ENCODE measurements at regions of chr21 and their contacts with region 1.

Region 1: GRCh38 chr21:42818328-42818749 is 61.0 kb downstream of the WDR4 start:
- DNase-seq: peak; percentile 70
- ATAC-seq: peak; percentile 69
- H3K4me3 ChIP-seq: no peak overlapping the region
- H3K4me3 Mint-ChIP-seq: no peak overlapping the region
- H3K27ac ChIP-seq: no peak overlapping the region
- H3K27ac Mint-ChIP-seq: no peak overlapping the region
- H3K4me1 ChIP-seq: no peaks in the 10 kb centered on the region
- H3K4me1 Mint-ChIP-seq: no peaks in the 10 kb centered on the region
- H3K27me3 ChIP-seq: peaks cover 0 to 3% (median 1%) of the 10 kb centered on the region in 4 experiments
- H3K27me3 Mint-ChIP-seq: peaks cover 11% of the 10 kb centered on the region
- CTCF ChIP-seq: peak; percentile 85

Region 2: DNA sequence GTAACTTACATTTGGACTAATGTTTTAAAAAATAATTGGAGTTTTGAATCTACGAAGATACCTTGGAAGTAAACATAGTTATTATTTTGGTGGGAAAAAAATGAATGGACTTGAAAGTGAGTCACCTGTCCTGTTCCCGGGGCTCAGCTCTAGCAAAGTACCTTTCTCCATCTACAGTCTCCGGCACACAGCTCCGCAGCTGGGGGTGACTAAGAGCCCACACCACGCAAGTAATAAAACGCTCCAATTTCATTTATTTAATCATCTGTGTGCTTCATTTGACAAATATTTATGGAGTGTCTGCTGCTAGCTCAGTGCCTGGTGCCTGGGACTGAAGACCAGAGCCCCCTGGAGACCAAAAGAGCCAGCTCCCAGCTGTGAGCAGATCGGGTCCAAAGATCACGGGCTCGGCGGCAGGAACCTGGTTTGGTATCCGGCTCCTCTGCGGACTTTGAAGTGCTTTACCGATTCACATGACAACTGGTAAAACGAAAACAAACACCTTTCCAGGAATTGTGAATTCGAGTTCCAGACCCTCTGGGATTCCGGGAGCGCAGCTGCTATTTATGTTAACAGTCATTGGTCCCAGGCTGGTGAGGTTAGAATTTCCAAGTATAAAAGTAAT is 1049.8 kb before region 1 on chr21:
- CTCF ChIA-PET with region 1: no interaction called
- POLR2A ChIA-PET with region 1: no interaction called
- intact Hi-C with region 1: no loop called
- DNase-seq: peak; percentile 52
- ATAC-seq: no peak
- H3K4me3 ChIP-seq: peak overlapping the region in 4 of 5 experiments; percentile 8 to 61 (median 40)
- H3K4me3 Mint-ChIP-seq: peak overlapping the region; percentile 88
- H3K27ac ChIP-seq: no peak overlapping the region
- H3K27ac Mint-ChIP-seq: no peak overlapping the region
- H3K4me1 ChIP-seq: peaks cover 28 to 33% of the 10 kb centered on the region in 2 donors
- H3K4me1 Mint-ChIP-seq: peaks cover 24% of the 10 kb centered on the region
- H3K27me3 ChIP-seq: peaks cover 0 to 76% (median 40%) of the 10 kb centered on the region in 4 experiments
- H3K27me3 Mint-ChIP-seq: peaks cover 83% of the 10 kb centered on the region
- CTCF ChIP-seq: no peak

Region 3: DNA sequence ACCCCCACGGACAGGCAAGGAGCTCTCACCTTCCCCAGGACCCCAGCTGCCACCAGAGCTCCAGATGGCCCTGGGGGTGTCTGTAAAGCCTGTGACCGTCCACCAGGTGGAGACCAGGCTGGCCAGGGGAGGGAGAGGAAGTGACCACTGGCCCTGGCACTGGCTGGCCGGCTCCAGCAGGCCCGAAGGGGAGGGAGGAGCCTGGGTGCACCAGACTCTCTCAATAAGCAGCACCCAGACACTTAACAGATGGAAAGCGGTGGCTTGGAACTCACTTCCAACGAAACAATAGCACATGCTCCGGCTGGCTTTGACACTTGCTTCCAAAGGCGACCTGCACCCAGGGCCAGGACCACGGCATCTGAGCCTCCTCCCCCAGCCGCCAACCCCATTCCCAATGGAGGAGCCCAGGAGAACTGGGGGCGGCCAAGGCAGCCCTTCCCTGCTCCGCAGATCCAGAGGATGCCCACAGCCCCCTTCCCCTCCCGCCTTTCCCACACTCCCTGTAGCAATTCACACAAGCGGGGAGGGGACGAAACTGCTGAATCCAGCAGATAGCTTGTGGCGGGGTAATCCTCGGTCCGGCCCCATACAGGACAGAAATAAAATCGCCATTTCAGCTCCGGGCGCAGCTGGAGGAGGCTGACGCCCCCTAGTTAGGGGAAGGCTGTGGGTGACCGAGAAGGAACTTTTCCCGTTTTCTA is 165.7 kb before region 1 on chr21:
- CTCF ChIA-PET with region 1: no interaction called
- POLR2A ChIA-PET with region 1: no interaction called
- intact Hi-C with region 1: loop called (anchors 1 kb)
- DNase-seq: no peak
- ATAC-seq: no peak
- H3K4me3 ChIP-seq: peak overlapping the region in 1 of 5 experiments; percentile 19
- H3K4me3 Mint-ChIP-seq: peak overlapping the region; percentile 80
- H3K27ac ChIP-seq: no peak overlapping the region
- H3K27ac Mint-ChIP-seq: peak overlapping the region; percentile 32
- H3K4me1 ChIP-seq: peaks cover 31 to 34% of the 10 kb centered on the region in 2 donors
- H3K4me1 Mint-ChIP-seq: peaks cover 16% of the 10 kb centered on the region
- H3K27me3 ChIP-seq: peaks cover 0 to 53% (median 30%) of the 10 kb centered on the region in 4 experiments
- H3K27me3 Mint-ChIP-seq: peaks cover 49% of the 10 kb centered on the region
- CTCF ChIP-seq: no peak

Region 4: GRCh38 chr21:42737951-42738590 is 80.3 kb before region 1 on chr21:
- CTCF ChIA-PET with region 1: interaction called, 3 read pairs
- POLR2A ChIA-PET with region 1: no interaction called
- intact Hi-C with region 1: loop called (anchors 10 kb)
- DNase-seq: peak; percentile 23
- ATAC-seq: peak; percentile 80
- H3K4me3 ChIP-seq: peak overlapping the region in 3 of 5 experiments; percentile 12 to 34 (median 21)
- H3K4me3 Mint-ChIP-seq: peak overlapping the region; percentile 77
- H3K27ac ChIP-seq: peak overlapping the region; percentile 48 to 76
- H3K27ac Mint-ChIP-seq: peak overlapping the region; percentile 97
- H3K4me1 ChIP-seq: peaks cover 9 to 10% of the 10 kb centered on the region in 2 donors
- H3K4me1 Mint-ChIP-seq: peaks cover 14% of the 10 kb centered on the region
- H3K27me3 ChIP-seq: no peaks in the 10 kb centered on the region
- H3K27me3 Mint-ChIP-seq: no peaks in the 10 kb centered on the region
- CTCF ChIP-seq: no peak

Region 5: GRCh38 chr21:42833439-42833815 is 15.1 kb after region 1 on chr21:
- CTCF ChIA-PET with region 1: no interaction called
- POLR2A ChIA-PET with region 1: no interaction called
- intact Hi-C with region 1: no loop called
- DNase-seq: peak; percentile 52
- ATAC-seq: peak; percentile 69
- H3K4me3 ChIP-seq: no peak overlapping the region
- H3K4me3 Mint-ChIP-seq: no peak overlapping the region
- H3K27ac ChIP-seq: no peak overlapping the region
- H3K27ac Mint-ChIP-seq: no peak overlapping the region
- H3K4me1 ChIP-seq: peaks cover 3 to 13% of the 10 kb centered on the region in 2 donors
- H3K4me1 Mint-ChIP-seq: peaks cover 14% of the 10 kb centered on the region
- H3K27me3 ChIP-seq: peaks cover 0 to 9% (median 3%) of the 10 kb centered on the region in 4 experiments
- H3K27me3 Mint-ChIP-seq: peaks cover 13% of the 10 kb centered on the region
- CTCF ChIP-seq: no peak

Measured in B cell (primary cell).